ENCODE measurements at regions of chr11 and their contacts with region 1.

Region 1: DNA sequence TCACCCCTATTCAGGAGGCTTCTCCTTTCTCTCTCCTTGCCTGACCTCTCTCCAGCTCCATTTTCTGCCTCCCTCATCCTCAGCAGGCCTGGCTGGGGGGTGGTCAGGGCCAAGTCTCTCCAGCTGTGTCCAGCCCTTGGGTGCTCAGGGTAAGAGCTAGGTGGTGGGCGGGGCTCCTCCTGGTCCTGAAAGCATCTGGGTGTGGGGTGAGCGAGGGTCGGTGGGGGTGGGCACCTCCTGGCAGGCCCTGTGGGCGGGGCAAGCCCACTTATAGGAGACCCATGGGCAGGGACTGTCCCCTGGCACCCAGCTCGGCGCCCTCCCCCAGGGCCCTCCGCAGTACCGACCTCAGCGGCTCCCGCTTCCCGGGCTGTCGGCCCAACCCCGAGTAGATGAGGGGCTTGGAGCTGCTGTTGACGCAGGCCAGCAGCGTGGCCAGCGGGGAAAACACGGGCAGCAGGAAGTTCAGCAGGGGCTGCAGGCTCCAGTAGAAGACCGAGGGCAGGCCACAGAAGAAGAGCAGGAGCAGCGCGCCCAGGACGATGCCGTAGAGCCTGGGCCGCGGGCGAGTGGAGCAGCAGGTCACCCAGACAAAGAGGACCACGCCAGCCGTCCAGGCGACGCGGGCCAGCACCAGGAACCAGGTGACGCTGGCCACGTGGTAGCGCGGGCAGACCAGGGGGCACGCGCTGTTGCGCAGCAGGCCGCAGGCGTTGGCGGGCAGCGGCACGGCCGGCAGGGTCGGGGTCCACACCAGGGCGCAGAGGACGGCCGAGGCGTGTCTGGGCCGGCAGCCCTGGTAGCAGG is 734 bp downstream of the MRGPRG start:
- DNase-seq: peak in 3 of 7 donors; percentile 7 to 17 (median 10)
- H3K4me3 ChIP-seq: no peak overlapping the region
- H3K27ac ChIP-seq: no peak overlapping the region
- H3K4me1 ChIP-seq: no peaks in the 10 kb centered on the region
- H3K27me3 ChIP-seq: peaks cover 7% of the 10 kb centered on the region
- CTCF ChIP-seq: no peak
- POLR2A ChIP-seq: no peak

Region 2: DNA sequence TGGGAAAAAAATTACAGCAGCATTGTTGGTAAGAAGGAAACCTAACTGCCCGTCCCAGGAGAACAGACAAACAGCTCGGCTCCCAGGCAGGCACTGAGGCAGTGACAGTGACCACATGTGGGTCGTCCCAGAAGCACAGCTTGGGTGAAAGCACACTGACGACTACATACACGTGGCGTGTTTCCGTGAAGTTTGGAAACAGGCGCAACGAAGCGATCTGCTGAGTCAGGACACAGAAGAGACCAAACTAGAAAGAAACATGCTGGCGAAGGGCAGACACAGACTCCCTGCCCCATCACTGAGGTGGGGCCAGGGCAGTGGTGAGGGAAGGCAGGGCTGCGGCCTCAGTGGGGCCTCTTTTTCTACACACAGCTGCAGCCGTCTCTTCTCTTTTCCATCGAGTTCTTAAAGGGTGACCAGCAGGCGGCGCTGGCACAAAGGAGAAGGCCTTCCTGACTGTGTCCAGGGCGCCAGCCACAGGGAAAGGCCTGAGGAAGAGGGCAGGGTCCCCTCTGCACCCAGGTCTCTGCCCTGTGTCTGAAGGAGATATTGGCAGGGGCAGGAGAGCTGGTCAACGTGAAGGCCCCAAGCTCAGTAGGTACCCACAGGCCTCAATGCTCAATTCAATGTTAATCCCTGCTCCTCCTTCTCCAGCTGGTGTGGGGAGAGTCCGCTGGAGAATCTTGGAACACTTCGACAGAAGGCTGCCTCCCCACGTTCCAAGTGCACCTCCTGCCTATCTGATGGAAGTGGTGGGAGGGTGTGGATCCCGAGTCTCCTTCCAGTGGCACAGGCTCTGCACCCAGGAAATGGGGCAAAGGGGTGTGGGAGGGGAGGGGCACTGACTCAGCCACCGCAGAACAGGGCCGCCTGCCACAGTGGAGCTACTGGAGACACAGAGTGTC is 180.6 kb before region 1 on chr11:
- intact Hi-C with region 1: loop called in 1 of 2 experiments (anchors 5 kb)
- DNase-seq: peak; percentile 69 to 91 (median 84)
- H3K4me3 ChIP-seq: no peak overlapping the region
- H3K27ac ChIP-seq: peak overlapping the region in 1 of 5 donors; percentile 50
- H3K4me1 ChIP-seq: no peaks in the 10 kb centered on the region
- H3K27me3 ChIP-seq: no peaks in the 10 kb centered on the region
- CTCF ChIP-seq: peak; percentile 75 to 88 (median 80)
- POLR2A ChIP-seq: no peak

Region 3: GRCh38 chr11:3109921-3110706 is 107.8 kb before region 1 on chr11:
- intact Hi-C with region 1: loop called in 1 of 2 experiments (anchors 5 kb)
- DNase-seq: peak in 5 of 7 donors; percentile 40 to 62 (median 54)
- H3K4me3 ChIP-seq: no peak overlapping the region
- H3K27ac ChIP-seq: no peak overlapping the region
- H3K4me1 ChIP-seq: no peaks in the 10 kb centered on the region
- H3K27me3 ChIP-seq: no peaks in the 10 kb centered on the region
- CTCF ChIP-seq: peak; percentile 44 to 81 (median 66)
- POLR2A ChIP-seq: no peak

Region 4: GRCh38 chr11:3123761-3124733 is 93.8 kb before region 1 on chr11:
- intact Hi-C with region 1: loop called in 1 of 2 experiments (anchors 10 kb)
- DNase-seq: peak; percentile 86 to 97 (median 95)
- H3K4me3 ChIP-seq: no peak overlapping the region
- H3K27ac ChIP-seq: peak overlapping the region in 3 of 5 donors; percentile 24 to 50 (median 41)
- H3K4me1 ChIP-seq: peaks cover 6 to 8% of the 10 kb centered on the region in 2 donors
- H3K27me3 ChIP-seq: no peaks in the 10 kb centered on the region
- CTCF ChIP-seq: no peak
- POLR2A ChIP-seq: no peak

Region 5: DNA sequence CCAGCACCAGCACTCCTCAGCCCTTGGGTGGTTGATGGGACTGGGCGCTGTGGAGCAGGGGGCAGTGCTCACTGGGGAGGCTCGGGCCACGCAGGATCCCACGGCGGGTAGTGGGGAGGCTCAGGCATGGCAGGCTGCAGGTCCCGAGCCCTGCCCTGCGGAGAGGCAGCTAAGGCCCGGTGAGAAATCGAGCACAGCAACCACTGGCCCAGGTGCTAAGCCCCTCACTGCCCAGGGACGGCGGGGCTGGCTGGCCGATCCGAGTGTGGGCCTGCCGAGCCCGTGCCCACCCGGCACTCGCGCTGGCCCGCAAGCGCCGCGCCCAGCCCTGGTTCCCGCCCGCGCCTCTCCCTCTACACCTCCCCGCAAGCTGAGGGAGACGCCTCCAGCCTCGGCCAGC is 217.1 kb after region 1 on chr11:
- intact Hi-C with region 1: no loop called
- DNase-seq: no peak
- H3K4me3 ChIP-seq: no peak overlapping the region
- H3K27ac ChIP-seq: no peak overlapping the region
- H3K4me1 ChIP-seq: no peaks in the 10 kb centered on the region
- H3K27me3 ChIP-seq: no peaks in the 10 kb centered on the region
- CTCF ChIP-seq: no peak
- POLR2A ChIP-seq: no peak

Measured in adrenal gland (tissue), 19 donors.